ENCODE measurements at regions of chr7 and their contacts with region 1.

Region 1: GRCh38 chr7:150988230-150989226 is 2.3 kb upstream of the NOS3 start:
- DNase-seq: peak; percentile 74
- H3K4me3 Mint-ChIP-seq: peak overlapping the region; percentile 15
- H3K27ac Mint-ChIP-seq: peak overlapping the region; percentile 10
- H3K4me1 Mint-ChIP-seq: peaks cover 36% of the 10 kb centered on the region
- H3K27me3 Mint-ChIP-seq: peaks cover 27% of the 10 kb centered on the region

Region 2: DNA sequence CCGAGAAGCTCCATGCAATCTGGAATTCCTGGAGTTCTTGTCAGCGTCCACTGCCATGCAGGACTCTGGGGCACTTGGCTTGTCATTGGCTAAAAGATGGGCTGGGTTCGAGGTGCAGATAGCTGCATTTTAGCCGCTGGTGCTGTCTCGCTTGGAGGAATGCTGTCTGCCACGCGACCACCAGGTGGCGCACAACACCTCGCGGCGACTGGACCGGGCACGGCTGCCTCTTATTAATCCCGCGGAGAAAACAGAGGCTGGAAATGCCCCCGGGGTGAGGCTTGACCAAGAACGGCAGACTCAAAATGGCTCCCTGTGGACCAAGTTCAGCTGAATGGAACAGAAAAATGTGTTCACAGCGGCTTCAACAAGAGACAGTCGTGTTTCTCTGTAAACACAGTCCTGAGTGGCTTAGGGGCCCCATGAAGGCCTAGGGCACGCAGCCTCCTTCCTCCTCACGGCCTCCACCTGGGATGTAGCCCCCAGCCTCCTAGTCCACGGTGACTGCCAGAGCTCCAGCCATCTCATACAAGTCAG is 90.0 kb before region 1 on chr7:
- CTCF ChIA-PET with region 1: interaction called, 14 read pairs
- POLR2A ChIA-PET with region 1: no interaction called
- DNase-seq: peak; percentile 81
- H3K4me3 Mint-ChIP-seq: no peak overlapping the region
- H3K27ac Mint-ChIP-seq: no peak overlapping the region
- H3K4me1 Mint-ChIP-seq: peaks cover 13% of the 10 kb centered on the region
- H3K27me3 Mint-ChIP-seq: peaks cover 58% of the 10 kb centered on the region

Region 3: DNA sequence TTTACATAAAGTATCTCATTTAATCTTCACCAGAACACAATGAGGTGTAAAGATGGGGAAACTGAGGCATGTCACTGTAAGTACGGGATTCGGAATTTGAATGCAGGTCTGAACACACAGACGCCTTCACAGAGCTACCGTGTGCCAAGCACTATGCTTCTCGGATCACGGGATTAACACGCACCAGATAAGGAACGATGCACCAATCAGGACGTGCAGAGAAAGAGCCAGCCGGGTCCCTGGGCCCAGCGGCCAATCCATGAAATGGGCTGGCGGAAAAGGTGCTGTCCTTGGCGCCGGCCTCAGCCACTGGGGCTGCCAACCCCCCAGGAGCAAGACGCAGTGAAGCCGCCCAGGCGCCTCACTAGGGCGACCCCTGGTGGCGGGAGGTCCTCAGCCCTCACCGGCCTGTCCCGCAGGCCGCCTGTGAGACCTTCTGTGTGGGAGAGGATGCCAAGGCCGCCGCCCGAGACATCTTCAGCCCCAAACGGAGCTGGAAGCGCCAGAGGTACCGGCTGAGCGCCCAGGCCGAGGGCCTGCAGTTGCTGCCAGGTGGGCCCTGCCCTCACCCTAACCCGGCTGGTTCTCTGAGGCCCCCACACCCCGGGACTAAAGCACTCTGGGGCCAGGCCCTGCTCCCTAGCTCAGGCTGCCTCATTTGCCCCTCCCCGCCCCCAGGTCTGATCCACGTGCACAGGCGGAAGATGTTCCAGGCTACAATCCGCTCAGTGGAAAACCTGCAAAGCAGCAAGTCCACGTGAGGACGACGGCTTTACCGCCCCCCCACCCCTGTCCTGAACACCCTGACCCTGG is 20.2 kb after region 1 on chr7:
- CTCF ChIA-PET with region 1: interaction called, 19 read pairs
- POLR2A ChIA-PET with region 1: interaction called, 31 read pairs
- DNase-seq: peak; percentile 79
- H3K4me3 Mint-ChIP-seq: peak overlapping the region; percentile 76
- H3K27ac Mint-ChIP-seq: peak overlapping the region; percentile 92
- H3K4me1 Mint-ChIP-seq: peaks cover 67% of the 10 kb centered on the region
- H3K27me3 Mint-ChIP-seq: peaks cover 2% of the 10 kb centered on the region

Region 4: DNA sequence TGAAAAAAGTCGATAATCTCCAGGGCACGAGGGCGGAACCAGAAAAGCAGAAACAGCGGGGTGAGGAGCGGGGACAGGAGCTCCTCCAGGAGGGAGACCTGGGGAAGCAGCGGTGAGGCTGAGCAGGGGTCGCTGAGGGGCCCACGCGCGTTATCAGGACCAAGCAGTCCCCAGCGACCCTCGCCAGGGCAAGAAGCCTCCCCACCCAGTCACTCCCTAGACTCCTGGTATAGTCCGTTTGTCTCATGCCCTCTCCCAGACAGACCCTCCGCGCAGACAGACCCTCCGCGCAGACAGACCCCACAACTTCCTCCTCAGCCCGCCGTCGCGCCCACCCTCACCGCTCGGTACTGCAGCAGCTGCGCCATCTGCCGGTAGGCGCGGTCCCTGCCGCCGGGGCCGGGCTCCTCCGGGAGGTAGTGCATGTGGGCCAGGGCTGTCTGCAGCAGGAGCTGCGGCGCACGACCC is 29.5 kb after region 1 on chr7:
- CTCF ChIA-PET with region 1: interaction called, 29 read pairs
- POLR2A ChIA-PET with region 1: interaction called, 4 read pairs
- DNase-seq: peak; percentile 82
- H3K4me3 Mint-ChIP-seq: peak overlapping the region; percentile 66
- H3K27ac Mint-ChIP-seq: no peak overlapping the region
- H3K4me1 Mint-ChIP-seq: peaks cover 61% of the 10 kb centered on the region
- H3K27me3 Mint-ChIP-seq: peaks cover 32% of the 10 kb centered on the region

Region 5: GRCh38 chr7:151351967-151352366 is 363.4 kb after region 1 on chr7:
- CTCF ChIA-PET with region 1: no interaction called
- POLR2A ChIA-PET with region 1: no interaction called
- DNase-seq: peak; percentile 76
- H3K4me3 Mint-ChIP-seq: peak overlapping the region; percentile 69
- H3K27ac Mint-ChIP-seq: peak overlapping the region; percentile 95
- H3K4me1 Mint-ChIP-seq: peaks cover 55% of the 10 kb centered on the region
- H3K27me3 Mint-ChIP-seq: no peaks in the 10 kb centered on the region

Measured in activated CD4-positive, alpha-beta memory T cell treated with anti-CD3 and anti-CD28 coated beads, Interleukin-2, amount 10 ng/mL, durations not matched to agents 7 days and 5 days (primary cell).